Right ventricle myocardium inferior (tissue), 1 donor: ENCODE measurements at regions of chr12 and their contacts with region 1.

Region 1: DNA sequence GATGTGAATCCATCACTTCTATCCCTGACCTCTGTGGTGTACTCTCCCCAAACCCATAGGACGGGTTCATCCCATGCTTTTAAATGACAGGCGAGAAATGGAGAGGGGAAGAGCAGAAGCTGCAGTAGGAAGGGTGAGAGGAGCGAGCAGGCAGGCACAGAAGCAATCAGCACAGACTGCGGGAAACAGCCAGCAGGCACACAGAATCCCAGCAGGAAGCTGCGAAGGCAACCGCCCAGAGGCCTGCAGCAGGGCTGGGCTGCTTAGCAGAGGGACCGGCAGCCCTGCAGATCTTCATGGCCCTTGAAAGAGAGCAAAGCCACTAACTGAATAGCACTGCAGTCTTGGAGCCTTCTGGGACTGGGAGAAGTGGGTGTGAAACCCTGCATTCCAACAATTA is 287.0 kb upstream of the FKBP4 start:
- DNase-seq: no peak
- ATAC-seq: no peak

Region 2: DNA sequence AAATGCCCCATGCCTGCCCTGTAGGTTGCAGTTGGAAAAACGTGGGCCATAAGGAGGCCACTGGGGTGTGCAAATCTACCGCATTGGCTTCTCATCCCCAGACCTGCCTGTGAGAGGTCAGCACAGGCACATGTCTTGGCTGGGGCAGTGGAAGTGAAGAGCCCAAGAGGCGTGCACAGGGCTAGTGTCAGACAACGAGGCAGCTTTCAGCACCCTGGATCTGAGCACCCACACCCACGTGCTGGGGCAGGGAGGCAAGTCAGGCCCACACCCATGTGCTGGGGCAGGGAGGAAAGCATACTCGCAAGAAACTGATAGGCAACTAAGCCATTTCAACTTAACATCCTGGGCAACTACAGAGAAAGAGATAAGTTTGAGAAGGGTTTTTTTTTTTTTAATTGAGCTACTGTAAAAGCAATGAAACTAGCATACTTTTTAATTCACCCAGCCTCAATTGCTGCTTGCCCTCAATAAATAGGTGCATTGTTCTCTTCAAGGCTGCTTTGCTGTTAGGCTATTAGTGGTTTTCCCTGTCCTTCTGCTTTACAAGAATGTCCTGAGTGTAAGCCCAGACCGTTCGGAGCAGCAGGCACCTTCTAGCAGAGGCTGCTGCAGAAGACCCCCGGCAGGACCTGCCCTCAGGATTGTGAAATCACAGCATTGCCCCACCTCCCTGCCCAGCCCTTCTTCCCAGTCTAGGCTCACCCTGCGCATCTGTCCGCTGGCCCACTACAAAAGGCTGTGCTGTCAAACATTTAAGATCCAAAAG is 68.3 kb before region 1 on chr12:
- intact Hi-C with region 1: loop called (anchors 5 kb)
- DNase-seq: no peak
- ATAC-seq: peak; percentile 79

Region 3: DNA sequence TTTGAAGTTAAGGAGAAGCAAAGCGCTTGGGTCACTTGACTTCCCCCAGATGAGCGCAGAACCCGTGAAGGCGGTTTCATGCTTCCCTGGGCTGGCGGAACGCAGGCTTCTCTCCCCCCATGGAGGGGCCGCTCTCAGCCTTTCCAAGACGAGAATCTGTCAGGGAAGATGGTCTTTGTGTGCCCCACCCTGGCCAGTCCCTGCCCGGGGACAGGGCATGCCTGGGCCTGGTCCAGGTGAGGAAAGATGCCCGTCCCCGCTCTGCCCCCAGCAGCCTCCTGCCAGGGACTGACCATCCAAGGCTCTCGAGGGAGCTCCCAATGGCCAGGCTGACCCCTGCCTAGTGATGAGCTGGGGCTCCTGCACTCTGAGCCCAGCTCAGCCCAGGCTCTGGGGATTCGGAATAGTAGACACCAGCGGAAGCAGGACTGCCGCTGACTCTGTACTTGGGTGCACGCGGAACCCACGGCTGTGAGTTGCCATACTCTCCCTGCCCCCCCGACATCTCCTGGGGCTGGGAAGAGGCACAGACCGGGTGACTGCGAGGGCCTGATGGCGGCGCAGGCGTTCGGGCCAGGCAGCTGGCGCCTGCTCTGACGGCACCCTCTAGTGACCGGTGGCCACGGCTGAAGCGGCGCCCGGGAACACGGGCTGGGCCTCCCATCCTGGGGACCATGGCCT is 144.7 kb after region 1 on chr12:
- intact Hi-C with region 1: no loop called
- DNase-seq: no peak
- ATAC-seq: no peak